Testis (tissue), 5 donors: ENCODE measurements at regions of chr20 and their contacts with region 1.

Region 1: GRCh38 chr20:9359561-9360308 is 154.7 kb upstream of the LAMP5 start:
- DNase-seq: peak; percentile 60
- H3K4me3 ChIP-seq: no peak overlapping the region
- H3K27ac ChIP-seq: no peak overlapping the region
- H3K4me1 ChIP-seq: no peaks in the 10 kb centered on the region
- H3K27me3 ChIP-seq: no peaks in the 10 kb centered on the region
- CTCF ChIP-seq: peak; percentile 37 to 57 (median 54)
- POLR2A ChIP-seq: no peak

Region 2: GRCh38 chr20:8782804-8783203 is 576.9 kb before region 1 on chr20:
- intact Hi-C with region 1: loop called (anchors 10 kb)
- DNase-seq: no peak
- H3K4me3 ChIP-seq: no peak overlapping the region
- H3K27ac ChIP-seq: peak overlapping the region in 1 of 2 donors; percentile 48
- H3K4me1 ChIP-seq: no peaks in the 10 kb centered on the region
- H3K27me3 ChIP-seq: no peaks in the 10 kb centered on the region
- CTCF ChIP-seq: no peak
- POLR2A ChIP-seq: no peak

Region 3: DNA sequence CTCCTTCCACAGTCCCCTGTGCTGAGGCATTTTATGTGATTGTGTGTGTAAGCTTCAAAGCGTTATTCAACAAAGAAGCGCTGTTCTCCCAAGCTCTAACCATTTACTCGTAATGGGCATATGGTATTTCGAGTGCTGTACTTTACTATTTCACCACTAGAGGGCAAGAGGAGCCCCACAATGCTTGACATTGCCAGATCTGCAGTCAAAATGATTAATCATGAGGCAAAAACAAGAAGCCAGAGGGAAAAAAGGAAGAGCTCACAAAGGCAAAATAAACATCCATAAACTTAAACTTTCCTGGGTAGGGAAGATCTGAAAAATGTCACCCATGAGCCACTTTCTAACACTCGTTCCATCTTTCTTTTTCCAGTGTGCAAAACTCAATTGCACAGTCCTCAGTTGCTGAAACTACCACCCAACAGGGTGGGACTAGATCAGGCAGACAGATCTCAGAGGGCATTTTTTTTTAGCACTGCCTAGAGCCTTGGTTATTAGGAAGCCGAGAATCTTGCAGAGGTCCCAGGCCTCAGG is 505.9 kb before region 1 on chr20:
- intact Hi-C with region 1: loop called (anchors 5 kb)
- DNase-seq: peak; percentile 45
- H3K4me3 ChIP-seq: no peak overlapping the region
- H3K27ac ChIP-seq: peak overlapping the region in 1 of 2 donors; percentile 77
- H3K4me1 ChIP-seq: peaks cover 8% of the 10 kb centered on the region
- H3K27me3 ChIP-seq: no peaks in the 10 kb centered on the region
- CTCF ChIP-seq: peak; percentile 91 to 96 (median 92)
- POLR2A ChIP-seq: no peak

Region 4: GRCh38 chr20:9252991-9253539 is 106.7 kb before region 1 on chr20:
- intact Hi-C with region 1: no loop called
- DNase-seq: no peak
- H3K4me3 ChIP-seq: no peak overlapping the region
- H3K27ac ChIP-seq: no peak overlapping the region
- H3K4me1 ChIP-seq: no peaks in the 10 kb centered on the region
- H3K27me3 ChIP-seq: no peaks in the 10 kb centered on the region
- CTCF ChIP-seq: no peak
- POLR2A ChIP-seq: no peak

Region 5: DNA sequence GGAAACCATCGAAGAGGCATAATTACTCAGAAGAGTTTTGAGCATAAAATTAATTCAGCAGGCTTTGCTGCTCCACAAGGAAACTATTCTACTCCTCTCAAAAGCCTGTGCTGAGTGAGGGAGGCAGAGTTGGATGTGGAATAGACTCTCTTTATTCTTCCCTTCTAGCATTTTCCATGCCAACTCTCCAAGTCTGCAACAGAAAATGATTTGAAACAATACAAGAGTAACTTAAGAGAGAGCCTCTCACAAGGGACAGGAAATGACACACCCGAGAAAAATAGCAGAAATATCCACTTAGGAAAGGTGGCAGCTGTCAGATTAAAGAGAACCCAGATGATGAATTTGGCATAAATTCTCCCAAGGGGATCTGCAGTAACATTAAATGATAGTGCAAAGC is 128.3 kb after region 1 on chr20:
- intact Hi-C with region 1: no loop called
- DNase-seq: no peak
- H3K4me3 ChIP-seq: no peak overlapping the region
- H3K27ac ChIP-seq: no peak overlapping the region
- H3K4me1 ChIP-seq: no peaks in the 10 kb centered on the region
- H3K27me3 ChIP-seq: no peaks in the 10 kb centered on the region
- CTCF ChIP-seq: no peak
- POLR2A ChIP-seq: no peak